ENCODE measurements at regions of chr10 and their contacts with region 1.

Region 1: GRCh38 chr10:119859420-119860258 is 13.0 kb downstream of the MCMBP start:
- DNase-seq: no peak
- H3K4me3 ChIP-seq: no peak overlapping the region
- H3K27ac ChIP-seq: no peak overlapping the region
- H3K27me3 ChIP-seq: no peaks in the 10 kb centered on the region
- CTCF ChIP-seq: peak; percentile 56

Region 2: GRCh38 chr10:119608316-119609155 is 251.1 kb before region 1 on chr10:
- CTCF ChIA-PET with region 1: interaction called, 19 read pairs
- POLR2A ChIA-PET with region 1: no interaction called
- DNase-seq: no peak
- H3K4me3 ChIP-seq: no peak overlapping the region
- H3K27ac ChIP-seq: no peak overlapping the region
- H3K27me3 ChIP-seq: no peaks in the 10 kb centered on the region
- CTCF ChIP-seq: peak; percentile 65

Region 3: GRCh38 chr10:119725828-119726675 is 133.6 kb before region 1 on chr10 and contains the start of gene INPP5F:
- CTCF ChIA-PET with region 1: interaction called, 23 read pairs
- POLR2A ChIA-PET with region 1: no interaction called
- DNase-seq: peak; percentile 92
- H3K4me3 ChIP-seq: peak within 1 kb of the TSS; percentile 71
- H3K27ac ChIP-seq: peak within 1 kb of the TSS; percentile 65
- H3K27me3 ChIP-seq: no peaks in the 10 kb centered on the region
- CTCF ChIP-seq: peak; percentile 21; the same call in 1 of the 2 replicates
- polyA plus RNA-seq, gene INPP5F: 21.8 and 22.3 TPM in 2 replicates

Region 4: DNA sequence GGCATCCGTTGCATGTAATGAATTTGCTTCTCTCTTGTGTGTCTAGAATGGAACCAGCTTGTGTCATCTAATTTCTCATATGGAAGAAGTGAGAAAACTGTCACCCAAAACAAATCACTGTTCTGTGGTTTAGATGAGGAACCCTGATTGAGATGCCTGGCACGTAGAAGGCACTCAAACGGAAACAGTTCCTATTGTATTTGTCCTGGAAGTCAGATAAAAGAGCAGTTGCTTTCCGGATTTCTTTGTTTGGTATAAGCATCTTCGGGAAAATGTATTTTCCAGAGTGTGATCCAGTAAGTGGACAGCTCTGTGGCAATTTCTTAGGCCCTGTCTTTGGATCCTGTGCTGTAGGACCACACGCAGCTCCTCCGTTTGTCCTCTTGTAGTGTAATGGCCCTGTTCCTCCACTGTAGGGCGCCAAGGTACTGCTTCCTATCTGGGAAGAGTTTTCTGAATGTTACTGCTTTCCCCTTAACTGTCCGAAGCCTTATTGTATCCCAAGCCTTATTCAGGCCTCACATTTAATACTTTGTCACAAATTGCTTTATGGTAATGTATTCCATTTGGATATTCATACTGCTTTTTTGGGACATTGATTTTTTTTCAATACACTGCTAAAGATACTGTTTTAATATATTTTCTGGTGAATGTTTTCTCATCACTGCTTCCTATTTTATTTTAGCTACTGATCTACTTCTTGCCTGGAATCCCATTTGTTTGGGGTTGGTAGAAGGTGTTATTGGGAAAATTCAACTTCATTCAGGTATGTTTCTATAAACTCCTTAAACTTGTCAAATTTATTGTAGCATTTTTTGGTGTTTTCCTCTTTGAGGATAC is 109.0 kb before region 1 on chr10:
- CTCF ChIA-PET with region 1: interaction called, 359 read pairs
- POLR2A ChIA-PET with region 1: no interaction called
- DNase-seq: peak; percentile 65
- H3K4me3 ChIP-seq: no peak overlapping the region
- H3K27ac ChIP-seq: no peak overlapping the region
- H3K27me3 ChIP-seq: no peaks in the 10 kb centered on the region
- CTCF ChIP-seq: peak; percentile 99

Region 5: GRCh38 chr10:119834188-119834587 is 25.5 kb before region 1 on chr10:
- CTCF ChIA-PET with region 1: interaction called, 28 read pairs
- POLR2A ChIA-PET with region 1: no interaction called
- DNase-seq: no peak
- H3K4me3 ChIP-seq: no peak overlapping the region
- H3K27ac ChIP-seq: no peak overlapping the region
- H3K27me3 ChIP-seq: no peaks in the 10 kb centered on the region
- CTCF ChIP-seq: no peak